Gastrocnemius medialis (tissue), 4 donors: ENCODE measurements at regions of chr10 and their contacts with region 1.

Region 1: DNA sequence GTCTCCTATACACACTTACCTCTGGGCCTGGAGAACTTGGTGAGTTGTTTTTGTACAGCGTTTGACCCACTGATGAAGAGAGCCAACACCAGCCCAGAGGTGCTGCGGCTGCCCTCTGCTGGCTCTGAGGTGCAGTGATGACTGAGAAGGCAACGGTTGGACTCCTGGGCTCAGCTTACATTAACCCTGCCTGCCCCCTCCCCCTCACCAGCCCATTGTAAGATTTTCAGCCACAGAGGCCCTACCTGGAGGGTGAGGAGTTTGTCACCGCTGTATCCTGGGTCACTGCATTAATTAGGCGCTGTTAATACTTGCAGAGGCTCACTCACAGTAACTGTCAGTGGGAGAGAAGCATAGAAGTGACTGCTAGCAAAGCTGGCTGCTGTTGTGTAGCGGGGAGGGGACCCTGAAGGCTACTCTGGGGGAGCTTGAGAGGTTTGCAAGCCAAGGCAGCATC is 19.0 kb upstream of the ANKRD2 start:
- DNase-seq: peak; percentile 60 to 79
- ATAC-seq: peak; percentile 90 to 94
- H3K4me3 ChIP-seq: no peak overlapping the region
- H3K27ac ChIP-seq: peak overlapping the region in 3 of 4 donors; percentile 30 to 42 (median 35)
- H3K4me1 ChIP-seq: peaks cover 32 to 40% of the 10 kb centered on the region in 2 donors
- H3K27me3 ChIP-seq: no peaks in the 10 kb centered on the region
- CTCF ChIP-seq: peak; percentile 65 to 86 (median 82)
- POLR2A ChIP-seq: no peak

Region 2: GRCh38 chr10:97259119-97259518 is 294.5 kb before region 1 on chr10:
- in situ Hi-C with region 1: no loop called
- intact Hi-C with region 1: no loop called
- DNase-seq: no peak
- ATAC-seq: no peak
- H3K4me3 ChIP-seq: no peak overlapping the region
- H3K27ac ChIP-seq: no peak overlapping the region
- H3K4me1 ChIP-seq: no peaks in the 10 kb centered on the region
- H3K27me3 ChIP-seq: no peaks in the 10 kb centered on the region
- CTCF ChIP-seq: no peak
- POLR2A ChIP-seq: no peak

Region 3: DNA sequence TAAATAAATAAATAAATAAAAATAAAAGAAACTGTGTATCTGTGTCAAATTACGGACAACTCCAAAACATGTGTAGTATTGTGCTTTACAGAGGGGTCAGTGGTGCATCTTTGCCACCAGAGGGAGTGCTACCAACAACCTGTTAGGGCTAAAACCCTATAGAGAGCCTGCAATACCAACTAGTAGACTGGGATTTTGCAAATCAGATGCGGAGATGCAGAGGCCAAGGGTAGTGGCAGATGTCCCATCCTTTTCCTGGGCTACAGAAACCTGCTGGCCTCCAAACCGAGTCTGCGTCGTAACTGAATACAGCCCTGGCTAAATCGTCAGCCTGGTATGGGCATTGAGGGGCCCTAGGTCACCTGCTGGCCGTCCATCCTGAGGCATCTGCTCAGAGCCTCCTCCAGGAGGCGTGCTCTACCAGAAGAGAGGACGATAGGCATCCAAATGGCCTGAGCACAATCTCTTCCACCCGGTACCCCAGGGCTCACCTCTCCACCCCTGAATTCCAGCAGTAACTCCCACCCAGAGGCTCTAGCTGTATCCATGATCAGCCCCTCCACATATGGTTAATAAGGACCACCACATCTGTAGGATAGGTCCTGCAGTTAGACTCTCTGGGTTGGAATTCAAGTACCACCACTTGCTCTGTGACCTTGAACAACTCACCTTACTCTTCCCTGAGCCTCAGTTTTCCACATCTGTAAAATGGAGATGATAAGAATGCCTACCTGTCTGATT is 146.2 kb before region 1 on chr10:
- in situ Hi-C with region 1: no loop called
- intact Hi-C with region 1: loop called (anchors 5 kb)
- DNase-seq: no peak
- ATAC-seq: peak; percentile 91 to 93
- H3K4me3 ChIP-seq: no peak overlapping the region
- H3K27ac ChIP-seq: peak overlapping the region in 1 of 4 donors; percentile 5
- H3K4me1 ChIP-seq: peaks cover 4 to 9% of the 10 kb centered on the region in 2 donors
- H3K27me3 ChIP-seq: no peaks in the 10 kb centered on the region
- CTCF ChIP-seq: peak; percentile 62 to 82 (median 74)
- POLR2A ChIP-seq: no peak

Region 4: DNA sequence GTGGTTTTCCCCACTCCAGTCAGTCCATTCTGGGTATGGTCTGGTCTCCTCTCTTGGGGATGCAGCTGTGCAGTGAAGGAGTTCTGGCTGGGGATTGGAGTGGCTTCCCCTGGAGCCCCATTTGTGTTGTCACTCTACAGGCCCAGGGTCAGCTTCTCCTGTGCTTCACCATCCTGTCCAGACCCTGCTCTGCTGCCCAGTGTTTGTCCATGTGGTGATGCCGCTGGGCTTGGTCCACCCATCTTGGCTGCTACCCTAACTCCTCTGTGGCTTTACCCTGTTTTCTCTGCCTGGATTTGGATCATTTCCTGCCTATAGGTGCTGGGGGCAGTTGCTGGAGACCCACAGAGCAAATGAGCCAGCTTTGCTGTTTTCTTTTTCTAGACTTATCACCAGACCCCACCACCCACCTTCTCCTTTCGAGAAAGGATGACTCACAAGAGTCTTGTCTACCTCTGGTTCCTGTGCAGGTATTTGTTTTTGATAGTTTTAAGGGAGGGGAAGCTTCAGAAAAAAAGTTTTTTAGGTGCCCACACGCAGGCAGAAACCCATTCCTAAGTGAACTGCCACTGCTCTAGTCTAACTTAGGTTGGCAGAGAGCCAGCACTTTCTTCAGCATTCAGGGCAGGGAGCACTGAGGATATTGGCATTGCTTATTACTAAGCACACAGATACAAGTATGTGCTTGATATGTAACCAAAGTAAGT is 99.1 kb before region 1 on chr10:
- in situ Hi-C with region 1: loop called in 1 of 4 experiments (anchors 10 kb)
- intact Hi-C with region 1: no loop called
- DNase-seq: no peak
- ATAC-seq: no peak
- H3K4me3 ChIP-seq: no peak overlapping the region
- H3K27ac ChIP-seq: peak overlapping the region in 1 of 4 donors; percentile 2
- H3K4me1 ChIP-seq: peaks cover 7 to 13% of the 10 kb centered on the region in 2 donors
- H3K27me3 ChIP-seq: no peaks in the 10 kb centered on the region
- CTCF ChIP-seq: no peak
- POLR2A ChIP-seq: no peak

Region 5: GRCh38 chr10:97463363-97464132 is 90.1 kb before region 1 on chr10:
- in situ Hi-C with region 1: loop called (anchors 5 to 10 kb)
- intact Hi-C with region 1: loop called (anchors 1 kb)
- DNase-seq: peak; percentile 16 to 51
- ATAC-seq: peak; percentile 79 to 81
- H3K4me3 ChIP-seq: no peak overlapping the region
- H3K27ac ChIP-seq: peak overlapping the region; percentile 54 to 64 (median 59)
- H3K4me1 ChIP-seq: peaks cover 5 to 8% of the 10 kb centered on the region in 2 donors
- H3K27me3 ChIP-seq: no peaks in the 10 kb centered on the region
- CTCF ChIP-seq: peak; percentile 83 to 90 (median 86)
- POLR2A ChIP-seq: no peak

Region 6: GRCh38 chr10:98115031-98115787 is 561.6 kb after region 1 on chr10:
- in situ Hi-C with region 1: no loop called
- intact Hi-C with region 1: no loop called
- DNase-seq: no peak
- ATAC-seq: no peak
- H3K4me3 ChIP-seq: no peak overlapping the region
- H3K27ac ChIP-seq: no peak overlapping the region
- H3K4me1 ChIP-seq: no peaks in the 10 kb centered on the region
- H3K27me3 ChIP-seq: peaks cover 0 to 3% (median 0%) of the 10 kb centered on the region in 3 donors
- CTCF ChIP-seq: no peak
- POLR2A ChIP-seq: no peak